AG04450 (cell line): ENCODE measurements at regions of chr20 and their contacts with region 1.

Region 1: GRCh38 chr20:58169450-58169849 is 59.0 kb downstream of the ANKRD60 start:
- DNase-seq: no peak
- H3K4me3 ChIP-seq: no peak overlapping the region
- H3K27ac ChIP-seq: no peak overlapping the region
- H3K27me3 ChIP-seq: peaks cover 7% of the 10 kb centered on the region
- CTCF ChIP-seq: no peak

Region 2: GRCh38 chr20:58028123-58028522 is 141.3 kb before region 1 on chr20:
- CTCF ChIA-PET with region 1: no interaction called
- POLR2A ChIA-PET with region 1: no interaction called
- DNase-seq: no peak
- H3K4me3 ChIP-seq: no peak overlapping the region
- H3K27ac ChIP-seq: no peak overlapping the region
- H3K27me3 ChIP-seq: no peaks in the 10 kb centered on the region
- CTCF ChIP-seq: no peak

Region 3: DNA sequence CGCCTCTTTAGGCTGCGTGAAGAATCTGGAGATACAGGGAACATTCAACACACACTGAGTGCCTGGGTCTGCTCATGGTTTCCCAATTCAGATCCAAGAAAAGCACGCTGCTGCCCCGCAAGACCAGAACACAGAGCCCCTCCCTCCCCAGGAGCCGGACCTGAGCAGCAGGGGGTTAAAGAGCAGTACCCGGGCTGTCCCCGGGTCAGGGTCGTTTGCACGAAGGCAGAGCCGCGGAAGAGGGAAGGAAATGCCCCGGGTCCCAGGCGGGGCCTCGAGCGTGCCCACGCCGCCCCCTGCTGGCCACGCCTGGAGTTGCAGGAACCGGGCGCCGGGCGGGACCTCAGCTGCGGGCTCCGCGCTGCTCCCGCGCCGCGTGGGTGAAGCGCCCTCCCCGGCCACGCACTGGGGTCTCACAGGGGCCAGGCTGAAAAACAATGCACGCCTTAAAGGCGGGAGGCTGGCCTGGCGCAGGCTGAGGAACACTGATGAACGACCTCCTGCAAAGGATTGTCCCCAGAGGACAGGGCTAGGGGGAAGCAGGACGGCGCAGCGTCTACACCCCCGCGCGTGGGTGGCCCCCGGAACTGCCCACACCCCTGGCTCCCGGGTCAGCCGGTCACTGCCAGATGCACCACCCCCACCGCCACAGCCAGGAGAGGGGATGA is 10.1 kb after region 1 on chr20:
- CTCF ChIA-PET with region 1: interaction called, 11 read pairs
- POLR2A ChIA-PET with region 1: no interaction called
- DNase-seq: no peak
- H3K4me3 ChIP-seq: peak overlapping the region; percentile 46
- H3K27ac ChIP-seq: no peak overlapping the region
- H3K27me3 ChIP-seq: peaks cover 24% of the 10 kb centered on the region
- CTCF ChIP-seq: peak; percentile 86

Region 4: DNA sequence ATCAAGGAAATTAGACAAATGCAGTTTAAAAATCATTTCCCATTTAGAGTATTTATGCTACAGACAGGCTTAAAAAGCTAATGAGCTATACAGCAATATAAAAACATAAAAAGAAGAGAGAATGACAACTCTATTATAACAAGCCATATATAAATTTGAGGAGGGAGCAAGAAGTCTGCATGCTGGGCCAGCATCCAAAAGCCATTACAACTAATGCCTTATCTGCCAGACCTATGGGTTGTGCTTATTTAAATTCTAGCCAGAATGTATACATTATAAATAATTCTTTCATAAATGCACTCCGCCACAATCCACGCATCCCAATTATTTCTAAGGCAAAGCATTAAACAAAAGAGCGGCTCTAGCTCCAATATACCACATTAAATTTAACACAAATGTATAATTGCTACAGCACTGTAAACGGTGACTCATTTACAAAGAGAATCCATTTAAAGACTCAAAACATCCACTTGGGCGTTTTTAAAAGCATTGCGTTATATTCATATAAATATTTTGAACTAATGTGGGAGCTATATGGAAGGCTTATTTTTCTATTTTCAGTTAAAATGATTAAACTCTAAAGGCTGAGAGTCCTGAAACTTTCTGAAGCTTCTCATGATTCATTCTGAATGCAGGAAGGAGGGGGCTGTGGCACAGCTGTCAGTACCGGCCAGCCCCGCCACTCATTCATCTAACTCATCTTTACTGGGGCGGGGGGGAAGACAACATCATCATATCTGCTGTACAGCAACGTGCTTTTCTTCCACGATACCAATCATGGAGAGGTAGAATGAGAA is 102.4 kb after region 1 on chr20:
- CTCF ChIA-PET with region 1: no interaction called
- POLR2A ChIA-PET with region 1: no interaction called
- DNase-seq: peak; percentile 8
- H3K4me3 ChIP-seq: no peak overlapping the region
- H3K27ac ChIP-seq: peak overlapping the region; percentile 62
- H3K27me3 ChIP-seq: no peaks in the 10 kb centered on the region
- CTCF ChIP-seq: no peak

Region 5: GRCh38 chr20:58313394-58313999 is 144.0 kb after region 1 on chr20:
- CTCF ChIA-PET with region 1: no interaction called
- POLR2A ChIA-PET with region 1: no interaction called
- DNase-seq: no peak
- H3K4me3 ChIP-seq: no peak overlapping the region
- H3K27ac ChIP-seq: no peak overlapping the region
- H3K27me3 ChIP-seq: no peaks in the 10 kb centered on the region
- CTCF ChIP-seq: no peak